ENCODE measurements at regions of chr2 and their contacts with region 1.

Region 1: DNA sequence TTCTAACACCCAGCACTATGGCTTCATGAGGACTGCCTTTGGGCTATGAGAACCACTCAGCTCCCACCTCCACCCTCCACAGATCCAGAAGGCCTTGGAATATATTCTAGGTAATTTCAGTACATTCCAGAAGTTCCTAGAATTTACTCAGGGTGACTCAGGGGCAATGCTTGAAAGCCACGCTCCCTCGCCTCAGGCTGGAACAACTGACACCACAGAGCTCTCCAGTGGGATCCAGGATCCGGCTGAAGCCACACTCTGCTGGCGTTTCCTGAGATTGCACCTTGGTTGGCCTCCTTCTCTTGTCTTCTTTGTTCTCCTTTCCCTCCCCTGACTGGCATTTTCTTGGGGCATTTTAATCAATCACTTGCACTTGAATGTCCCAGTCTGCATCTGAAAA is 92.7 kb upstream of the KCNE4 start:
- DNase-seq: no peak
- H3K4me3 ChIP-seq: no peak overlapping the region
- H3K27ac ChIP-seq: no peak overlapping the region
- H3K4me1 ChIP-seq: no peaks in the 10 kb centered on the region
- CTCF ChIP-seq: no peak

Region 2: DNA sequence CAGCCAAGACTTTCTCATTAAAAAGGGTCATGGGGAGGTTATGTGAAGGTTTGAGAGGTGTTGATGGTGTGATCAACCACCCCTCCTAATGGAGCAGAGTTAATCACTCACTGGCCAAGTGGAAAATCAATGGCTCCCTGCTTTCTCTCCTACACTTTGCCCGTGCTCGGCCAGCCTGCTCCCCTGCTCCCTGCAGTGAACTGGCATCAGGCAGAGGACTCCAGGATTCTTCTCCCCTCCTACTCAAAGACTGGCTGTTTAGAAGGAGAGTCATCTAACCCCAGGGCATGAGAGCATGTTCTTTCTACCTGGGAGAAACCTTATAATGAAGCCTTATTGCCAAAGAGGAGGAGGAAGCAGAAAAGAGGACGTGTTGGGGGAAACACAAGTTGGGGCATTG is 460.1 kb before region 1 on chr2:
- CTCF ChIA-PET with region 1: no interaction called
- POLR2A ChIA-PET with region 1: no interaction called
- intact Hi-C with region 1: no loop called
- DNase-seq: no peak
- H3K4me3 ChIP-seq: no peak overlapping the region
- H3K27ac ChIP-seq: no peak overlapping the region
- H3K4me1 ChIP-seq: no peaks in the 10 kb centered on the region
- CTCF ChIP-seq: no peak

Region 3: GRCh38 chr2:222949073-222949472 is 10.3 kb before region 1 on chr2:
- CTCF ChIA-PET with region 1: interaction called, 3 read pairs
- POLR2A ChIA-PET with region 1: interaction called, 11 read pairs
- intact Hi-C with region 1: no loop called
- DNase-seq: no peak
- H3K4me3 ChIP-seq: no peak overlapping the region
- H3K27ac ChIP-seq: no peak overlapping the region
- H3K4me1 ChIP-seq: no peaks in the 10 kb centered on the region
- CTCF ChIP-seq: no peak

Measured in OCI-LY7 (cell line).